CD8-positive, alpha-beta T cell (primary cell): ENCODE measurements at regions of chr16 and their contacts with region 1.

Region 1: GRCh38 chr16:89409161-89409711 is 81.1 kb downstream of the ANKRD11 start:
- DNase-seq: peak; percentile 56 to 94 (median 79)
- ATAC-seq: peak; percentile 84
- H3K4me3 ChIP-seq: no peak overlapping the region
- H3K4me3 Mint-ChIP-seq: peak overlapping the region; percentile 59
- H3K27ac ChIP-seq: peak overlapping the region; percentile 71 to 77
- H3K27ac Mint-ChIP-seq: peak overlapping the region; percentile 90
- H3K4me1 ChIP-seq: peaks cover 99% of the 10 kb centered on the region
- H3K4me1 Mint-ChIP-seq: peaks cover 88% of the 10 kb centered on the region
- H3K27me3 ChIP-seq: peaks cover 0 to 2% of the 10 kb centered on the region in 2 experiments
- H3K27me3 Mint-ChIP-seq: no peaks in the 10 kb centered on the region
- CTCF ChIP-seq: no peak

Region 2: GRCh38 chr16:89319883-89320781 is 89.1 kb before region 1 on chr16:
- CTCF ChIA-PET with region 1: interaction called, 4 read pairs
- POLR2A ChIA-PET with region 1: interaction called, 6 read pairs
- intact Hi-C with region 1: loop called in 1 of 2 experiments (anchors 1 kb)
- DNase-seq: peak in 6 of 9 experiments; percentile 17 to 52 (median 40)
- ATAC-seq: no peak
- H3K4me3 ChIP-seq: peak overlapping the region in 1 of 2 experiments; percentile 12
- H3K4me3 Mint-ChIP-seq: peak overlapping the region; percentile 57
- H3K27ac ChIP-seq: peak overlapping the region in 1 of 2 experiments; percentile 43
- H3K27ac Mint-ChIP-seq: peak overlapping the region; percentile 77
- H3K4me1 ChIP-seq: peaks cover 88% of the 10 kb centered on the region
- H3K4me1 Mint-ChIP-seq: peaks cover 92% of the 10 kb centered on the region
- H3K27me3 ChIP-seq: no peaks in the 10 kb centered on the region
- H3K27me3 Mint-ChIP-seq: no peaks in the 10 kb centered on the region
- CTCF ChIP-seq: no peak

Region 3: GRCh38 chr16:89361751-89362539 is 47.3 kb before region 1 on chr16:
- CTCF ChIA-PET with region 1: interaction called, 5 read pairs
- POLR2A ChIA-PET with region 1: interaction called, 4 read pairs
- intact Hi-C with region 1: loop called (anchors 1 to 2 kb)
- DNase-seq: no peak
- ATAC-seq: no peak
- H3K4me3 ChIP-seq: peak overlapping the region in 1 of 2 experiments; percentile 16
- H3K4me3 Mint-ChIP-seq: peak overlapping the region; percentile 8
- H3K27ac ChIP-seq: peak overlapping the region; percentile 11 to 56
- H3K27ac Mint-ChIP-seq: peak overlapping the region; percentile 92
- H3K4me1 ChIP-seq: peaks cover 80% of the 10 kb centered on the region
- H3K4me1 Mint-ChIP-seq: peaks cover 94% of the 10 kb centered on the region
- H3K27me3 ChIP-seq: no peaks in the 10 kb centered on the region
- H3K27me3 Mint-ChIP-seq: no peaks in the 10 kb centered on the region
- CTCF ChIP-seq: no peak

Region 4: DNA sequence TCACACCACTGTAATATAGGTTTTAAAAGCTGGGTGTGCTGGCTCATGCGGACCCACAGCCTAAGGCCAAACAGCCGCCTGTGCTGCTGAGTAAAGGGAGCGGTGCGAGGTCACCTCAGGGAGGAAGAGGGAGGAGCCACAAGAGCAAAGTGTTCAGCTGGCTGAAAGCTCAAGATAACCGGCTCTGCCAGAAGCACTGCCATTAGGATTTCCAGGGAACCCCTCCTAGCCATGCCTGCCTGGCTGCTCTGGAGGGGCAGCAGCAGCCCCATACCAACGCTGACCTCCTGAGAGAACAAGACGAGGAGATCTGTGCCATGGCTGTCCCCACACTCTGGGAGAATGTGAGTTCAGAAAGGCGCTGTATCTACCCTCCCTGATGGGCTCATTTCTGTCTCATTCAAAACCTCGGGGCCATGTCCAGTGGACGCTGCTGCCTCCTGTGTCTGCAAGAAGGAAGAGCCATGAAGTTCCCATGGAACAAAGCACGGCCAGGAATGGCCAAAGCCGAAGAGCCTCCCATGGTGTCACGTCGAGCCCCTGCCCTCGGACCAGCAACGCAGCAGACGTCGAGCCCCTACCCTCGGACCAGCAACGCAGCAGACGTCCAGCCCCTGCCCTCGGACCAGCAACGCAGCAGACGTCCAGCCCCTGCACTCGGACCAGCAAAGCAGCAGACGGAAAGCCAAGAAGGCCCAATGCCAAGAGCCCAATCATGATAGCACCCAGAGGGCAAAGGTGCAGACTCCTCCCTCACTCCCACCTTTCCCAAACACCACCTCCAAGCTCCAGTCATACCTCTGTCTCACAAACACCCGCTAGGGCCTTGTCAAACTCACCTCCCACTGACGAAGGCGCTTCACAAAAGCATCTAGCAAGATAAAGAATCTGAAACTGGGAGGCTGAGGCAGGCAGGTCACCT is 25.9 kb before region 1 on chr16:
- CTCF ChIA-PET with region 1: no interaction called
- POLR2A ChIA-PET with region 1: no interaction called
- intact Hi-C with region 1: loop called in 1 of 2 experiments (anchors 1 kb)
- DNase-seq: peak in 5 of 9 experiments; percentile 31 to 58 (median 32)
- ATAC-seq: peak; percentile 23
- H3K4me3 ChIP-seq: no peak overlapping the region
- H3K4me3 Mint-ChIP-seq: peak overlapping the region; percentile 73
- H3K27ac ChIP-seq: no peak overlapping the region
- H3K27ac Mint-ChIP-seq: peak overlapping the region; percentile 78
- H3K4me1 ChIP-seq: peaks cover 83% of the 10 kb centered on the region
- H3K4me1 Mint-ChIP-seq: peaks cover 87% of the 10 kb centered on the region
- H3K27me3 ChIP-seq: no peaks in the 10 kb centered on the region
- H3K27me3 Mint-ChIP-seq: no peaks in the 10 kb centered on the region
- CTCF ChIP-seq: no peak

Region 5: DNA sequence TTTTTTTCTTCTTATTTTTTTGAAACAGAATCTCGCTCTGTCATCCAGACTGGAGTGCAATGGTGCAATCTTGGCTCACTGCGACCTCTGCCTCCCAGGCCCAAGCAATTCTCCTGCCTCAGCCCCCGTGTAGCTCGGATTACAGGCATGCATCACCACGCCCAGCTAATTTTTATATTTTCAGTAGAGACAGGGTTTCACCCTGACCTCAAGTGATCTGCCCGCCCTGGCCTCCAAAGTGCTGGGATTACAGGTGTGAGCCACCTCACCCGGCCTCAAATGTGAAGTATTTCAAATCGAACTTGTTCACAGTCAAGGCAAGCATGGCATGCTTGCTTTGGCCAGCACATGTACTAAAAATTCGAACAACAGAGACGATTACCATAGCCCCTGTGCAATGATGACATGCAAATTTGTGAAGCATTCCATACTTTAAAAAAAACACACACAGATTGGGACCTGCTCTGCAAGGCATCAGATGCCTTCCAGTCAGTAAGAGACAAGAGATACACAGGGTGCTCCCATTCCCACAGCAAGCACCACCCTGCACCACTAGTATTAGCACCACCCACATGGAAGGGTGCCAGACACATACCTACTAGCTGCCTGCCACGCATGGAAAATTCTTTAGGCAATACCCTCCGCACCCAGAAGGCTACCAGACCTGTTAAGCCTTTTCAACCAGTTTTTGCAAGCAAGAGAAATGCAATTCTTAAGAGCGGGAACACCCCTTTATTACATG is 33.9 kb after region 1 on chr16:
- CTCF ChIA-PET with region 1: no interaction called
- POLR2A ChIA-PET with region 1: no interaction called
- intact Hi-C with region 1: loop called in 1 of 2 experiments (anchors 5 kb)
- DNase-seq: peak in 1 of 9 experiments; percentile 29
- ATAC-seq: no peak
- H3K4me3 ChIP-seq: no peak overlapping the region
- H3K4me3 Mint-ChIP-seq: peak overlapping the region; percentile 71
- H3K27ac ChIP-seq: peak overlapping the region in 1 of 2 experiments; percentile 23
- H3K27ac Mint-ChIP-seq: peak overlapping the region; percentile 15
- H3K4me1 ChIP-seq: peaks cover 92% of the 10 kb centered on the region
- H3K4me1 Mint-ChIP-seq: peaks cover 93% of the 10 kb centered on the region
- H3K27me3 ChIP-seq: no peaks in the 10 kb centered on the region
- H3K27me3 Mint-ChIP-seq: no peaks in the 10 kb centered on the region
- CTCF ChIP-seq: no peak

Region 6: GRCh38 chr16:89484923-89485679 is 75.9 kb after region 1 on chr16:
- CTCF ChIA-PET with region 1: interaction called, 4 read pairs
- POLR2A ChIA-PET with region 1: interaction called, 7 read pairs
- intact Hi-C with region 1: loop called (anchors 1 to 2 kb)
- DNase-seq: peak in 3 of 9 experiments; percentile 31 to 71 (median 56)
- ATAC-seq: no peak
- H3K4me3 ChIP-seq: peak overlapping the region; percentile 29 to 46
- H3K4me3 Mint-ChIP-seq: peak overlapping the region; percentile 77
- H3K27ac ChIP-seq: peak overlapping the region; percentile 4 to 69
- H3K27ac Mint-ChIP-seq: peak overlapping the region; percentile 95
- H3K4me1 ChIP-seq: peaks cover 82% of the 10 kb centered on the region
- H3K4me1 Mint-ChIP-seq: peaks cover 82% of the 10 kb centered on the region
- H3K27me3 ChIP-seq: no peaks in the 10 kb centered on the region
- H3K27me3 Mint-ChIP-seq: no peaks in the 10 kb centered on the region
- CTCF ChIP-seq: no peak